Head of caudate nucleus (tissue), 42 donors: ENCODE measurements at regions of chr20 and their contacts with region 1.

Region 1: GRCh38 chr20:18466894-18467730 is at the starts of genes DZANK1 and POLR3F:
- DNase-seq: peak; percentile 94 to 99 (median 98)

Region 2: DNA sequence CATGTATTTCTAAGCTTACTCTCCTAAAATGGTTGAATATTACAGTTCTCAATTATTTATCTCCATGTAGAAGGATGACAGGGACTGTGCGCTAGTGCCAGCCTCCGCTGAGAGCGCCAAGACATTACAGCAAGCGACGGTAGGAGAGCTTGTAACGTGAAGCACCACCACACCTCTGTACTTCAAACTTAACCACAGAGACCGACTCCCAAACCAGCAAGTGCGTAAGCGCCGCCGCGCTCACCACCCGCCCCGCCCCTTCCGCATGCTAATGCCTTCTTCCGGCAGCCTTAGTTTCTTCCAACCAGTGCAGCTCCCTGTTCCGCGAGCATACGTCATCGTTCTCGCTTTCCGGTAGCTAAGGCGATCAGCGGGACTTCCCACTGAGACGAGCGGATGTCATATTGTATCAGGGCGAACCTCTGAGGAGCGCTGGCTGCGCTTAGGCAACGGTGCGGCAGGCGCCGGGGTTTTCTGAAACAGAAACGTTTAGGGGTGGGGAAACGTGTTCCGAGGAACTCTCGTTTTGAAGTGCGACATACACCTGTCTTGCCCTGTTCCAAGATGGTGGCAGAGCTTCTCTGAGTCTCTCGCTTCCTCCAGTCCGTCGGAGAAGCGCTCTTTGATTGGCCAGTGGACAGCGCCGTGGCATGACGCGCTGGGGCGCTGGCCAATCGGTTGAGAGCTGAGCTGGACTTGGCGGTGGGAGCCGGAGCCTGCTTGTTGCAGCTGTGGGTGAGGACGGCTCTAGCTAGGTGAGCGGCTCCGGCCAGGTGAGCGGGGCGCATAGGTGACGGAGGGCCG is 40.3 kb after region 1 on chr20 and contains the start of gene SEC23B:
- intact Hi-C with region 1: loop called (anchors 5 kb)
- DNase-seq: peak; percentile 94 to 99 (median 98)

Region 3: GRCh38 chr20:18566892-18567742 is 100.0 kb after region 1 on chr20 and contains the start of gene SMIM26:
- intact Hi-C with region 1: loop called (anchors 10 kb)
- DNase-seq: peak; percentile 83 to 97 (median 92)